ENCODE measurements at regions of chr5 and their contacts with region 1.

Region 1: DNA sequence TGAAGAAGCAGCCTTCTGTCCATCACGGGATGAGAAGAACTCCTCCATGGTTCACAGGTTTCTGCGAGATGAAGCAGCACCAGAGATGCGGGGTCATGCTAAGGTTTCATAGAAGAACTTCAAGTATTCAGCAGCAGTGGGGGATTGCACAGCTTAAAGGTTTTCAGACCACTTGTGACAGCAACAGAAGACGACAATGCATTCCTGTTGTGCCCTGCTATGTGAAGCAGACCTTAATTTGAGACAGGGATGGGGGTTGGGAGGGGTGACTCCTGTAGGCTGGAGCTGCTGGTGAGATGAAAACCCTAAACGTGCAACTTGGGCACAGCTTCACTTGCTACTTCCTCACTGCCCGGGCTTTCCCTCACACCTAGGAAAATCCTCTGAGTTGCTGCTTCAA is 256.0 kb downstream of the SLIT3 start:
- DNase-seq: no peak
- ATAC-seq: no peak
- H3K4me3 ChIP-seq: no peak overlapping the region
- H3K27ac ChIP-seq: no peak overlapping the region
- H3K4me1 ChIP-seq: no peaks in the 10 kb centered on the region
- H3K27me3 ChIP-seq: no peaks in the 10 kb centered on the region
- CTCF ChIP-seq: no peak

Region 2: GRCh38 chr5:168159425-168159824 is 885.5 kb before region 1 on chr5:
- CTCF ChIA-PET with region 1: no interaction called
- POLR2A ChIA-PET with region 1: interaction called, 10 read pairs
- in situ Hi-C with region 1: no loop called
- intact Hi-C with region 1: no loop called
- DNase-seq: no peak
- ATAC-seq: no peak
- H3K4me3 ChIP-seq: no peak overlapping the region
- H3K27ac ChIP-seq: no peak overlapping the region
- H3K4me1 ChIP-seq: no peaks in the 10 kb centered on the region
- H3K27me3 ChIP-seq: no peaks in the 10 kb centered on the region
- CTCF ChIP-seq: no peak

Region 3: DNA sequence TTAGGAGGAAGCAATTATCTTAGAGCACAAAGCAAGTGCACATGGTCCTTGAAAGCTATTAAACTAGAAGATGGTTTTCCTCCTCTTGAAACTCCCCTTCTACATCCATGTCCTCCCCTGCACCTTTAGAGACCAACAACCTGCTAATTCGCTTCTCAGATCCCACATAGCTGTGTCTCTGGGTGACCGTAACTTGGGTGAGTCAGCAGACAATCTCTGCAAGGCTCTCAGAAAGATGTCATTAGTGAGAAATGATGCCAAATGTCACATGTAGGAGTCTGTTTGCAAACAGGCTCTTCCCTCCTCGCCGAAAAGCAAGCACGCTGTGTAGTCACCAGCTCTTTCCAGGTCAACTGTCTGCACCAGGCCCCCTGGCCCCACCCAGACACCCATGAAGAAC is 35.8 kb before region 1 on chr5:
- CTCF ChIA-PET with region 1: no interaction called
- POLR2A ChIA-PET with region 1: no interaction called
- in situ Hi-C with region 1: no loop called
- intact Hi-C with region 1: no loop called
- DNase-seq: no peak
- ATAC-seq: no peak
- H3K4me3 ChIP-seq: no peak overlapping the region
- H3K27ac ChIP-seq: no peak overlapping the region
- H3K4me1 ChIP-seq: peaks cover 3% of the 10 kb centered on the region; the same call in 1 of the 2 replicates
- H3K27me3 ChIP-seq: no peaks in the 10 kb centered on the region
- CTCF ChIP-seq: no peak

Measured in Panc1 (cell line).